Prostate gland (tissue), 2 donors: ENCODE measurements at regions of chr15 and their contacts with region 1.

Region 1: DNA sequence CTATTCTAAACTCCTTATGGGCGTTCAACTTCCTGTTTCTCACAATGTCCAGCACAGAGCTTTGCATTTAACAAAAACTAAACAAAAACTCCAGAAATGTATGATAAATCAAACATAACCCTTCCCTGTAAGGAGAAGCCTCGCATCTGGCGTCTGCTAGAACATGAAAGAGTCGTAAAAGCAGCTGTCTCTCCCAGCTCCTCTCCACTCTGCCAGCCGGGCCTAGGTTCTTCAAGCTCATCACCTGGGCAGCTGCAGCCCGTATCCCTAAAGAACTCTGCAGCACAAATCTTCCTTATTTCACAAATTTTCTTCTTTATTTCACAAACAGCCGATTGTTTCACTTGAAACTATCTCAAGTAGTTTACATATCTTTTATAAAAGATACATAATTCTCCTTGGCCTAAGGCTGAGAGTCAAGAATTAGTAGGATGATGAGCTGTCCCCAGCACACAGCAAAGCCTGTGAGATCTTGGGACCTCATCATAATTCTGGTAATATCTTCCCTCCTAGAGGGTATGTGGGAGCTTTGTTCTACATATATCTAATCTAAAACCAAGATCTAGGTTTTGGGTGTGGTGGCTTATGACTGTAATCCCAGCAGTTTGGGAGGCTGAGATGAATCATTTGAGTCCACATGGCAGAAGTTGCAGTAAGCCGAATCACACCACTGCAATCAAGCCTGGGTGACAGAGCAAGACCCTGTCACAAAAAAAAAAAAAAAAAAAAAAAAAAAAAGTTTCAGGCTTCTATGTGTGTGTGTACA is 35.3 kb downstream of the ANXA2 start:
- DNase-seq: no peak
- H3K4me3 ChIP-seq: no peak overlapping the region
- H3K27ac ChIP-seq: no peak overlapping the region
- H3K4me1 ChIP-seq: no peaks in the 10 kb centered on the region
- H3K27me3 ChIP-seq: no peaks in the 10 kb centered on the region
- CTCF ChIP-seq: no peak
- POLR2A ChIP-seq: no peak

Region 2: GRCh38 chr15:60047701-60048100 is 314.8 kb before region 1 on chr15:
- intact Hi-C with region 1: no loop called
- DNase-seq: no peak
- H3K4me3 ChIP-seq: no peak overlapping the region
- H3K27ac ChIP-seq: no peak overlapping the region
- H3K4me1 ChIP-seq: no peaks in the 10 kb centered on the region
- H3K27me3 ChIP-seq: no peaks in the 10 kb centered on the region
- CTCF ChIP-seq: no peak
- POLR2A ChIP-seq: no peak

Region 3: GRCh38 chr15:60070838-60071493 is 291.5 kb before region 1 on chr15:
- intact Hi-C with region 1: no loop called
- DNase-seq: no peak
- H3K4me3 ChIP-seq: no peak overlapping the region
- H3K27ac ChIP-seq: no peak overlapping the region
- H3K4me1 ChIP-seq: no peaks in the 10 kb centered on the region
- H3K27me3 ChIP-seq: no peaks in the 10 kb centered on the region
- CTCF ChIP-seq: no peak
- POLR2A ChIP-seq: no peak

Region 4: GRCh38 chr15:60195611-60196010 is 166.9 kb before region 1 on chr15:
- intact Hi-C with region 1: no loop called
- DNase-seq: no peak
- H3K4me3 ChIP-seq: no peak overlapping the region
- H3K27ac ChIP-seq: no peak overlapping the region
- H3K4me1 ChIP-seq: no peaks in the 10 kb centered on the region
- H3K27me3 ChIP-seq: no peaks in the 10 kb centered on the region
- CTCF ChIP-seq: no peak
- POLR2A ChIP-seq: no peak

Region 5: DNA sequence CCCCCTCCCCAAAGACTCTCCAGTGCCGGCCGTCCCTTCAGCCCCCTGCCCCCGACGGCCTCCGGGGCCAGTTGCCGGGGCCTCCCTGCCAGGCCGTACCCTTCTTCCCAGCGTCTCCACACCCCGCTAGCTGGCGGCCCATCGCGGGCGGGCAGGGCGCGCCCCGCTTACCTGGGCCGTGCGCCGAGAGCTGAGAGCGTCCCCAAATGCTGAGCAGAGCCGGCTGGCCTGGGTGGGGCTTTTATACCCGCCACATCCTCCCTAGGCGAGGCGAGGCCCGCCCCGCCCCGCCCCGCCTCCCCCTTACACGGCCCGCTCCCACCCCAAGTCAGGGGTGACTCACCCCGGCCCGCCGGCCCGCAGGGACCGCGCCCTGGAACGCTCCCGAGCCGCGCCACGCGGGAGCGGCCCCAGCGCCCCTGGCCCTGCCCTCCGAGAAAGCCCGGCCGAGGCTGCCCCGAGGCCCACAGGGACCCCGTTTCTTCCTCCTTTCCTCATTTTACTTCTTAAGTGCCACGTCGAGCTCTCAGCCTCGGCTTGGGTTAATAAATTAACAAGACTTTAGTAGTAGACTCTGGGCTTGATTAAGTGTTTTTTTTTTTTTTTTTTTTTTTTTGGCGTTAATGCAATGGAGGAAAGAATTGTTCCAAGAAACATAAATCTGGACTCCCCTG is 35.4 kb after region 1 on chr15 and contains the start of gene ANXA2:
- intact Hi-C with region 1: loop called (anchors 5 kb)
- DNase-seq: peak; percentile 85
- H3K4me3 ChIP-seq: peak within 1 kb of the TSS; percentile 76 to 79
- H3K27ac ChIP-seq: peak within 1 kb of the TSS; percentile 93 to 97
- H3K4me1 ChIP-seq: peaks cover 26% of the 10 kb centered on the region
- H3K27me3 ChIP-seq: no peaks in the 10 kb centered on the region
- CTCF ChIP-seq: no peak
- POLR2A ChIP-seq: peak; percentile 96
- total RNA-seq, gene ANXA2: 404 to 595 TPM

Region 6: DNA sequence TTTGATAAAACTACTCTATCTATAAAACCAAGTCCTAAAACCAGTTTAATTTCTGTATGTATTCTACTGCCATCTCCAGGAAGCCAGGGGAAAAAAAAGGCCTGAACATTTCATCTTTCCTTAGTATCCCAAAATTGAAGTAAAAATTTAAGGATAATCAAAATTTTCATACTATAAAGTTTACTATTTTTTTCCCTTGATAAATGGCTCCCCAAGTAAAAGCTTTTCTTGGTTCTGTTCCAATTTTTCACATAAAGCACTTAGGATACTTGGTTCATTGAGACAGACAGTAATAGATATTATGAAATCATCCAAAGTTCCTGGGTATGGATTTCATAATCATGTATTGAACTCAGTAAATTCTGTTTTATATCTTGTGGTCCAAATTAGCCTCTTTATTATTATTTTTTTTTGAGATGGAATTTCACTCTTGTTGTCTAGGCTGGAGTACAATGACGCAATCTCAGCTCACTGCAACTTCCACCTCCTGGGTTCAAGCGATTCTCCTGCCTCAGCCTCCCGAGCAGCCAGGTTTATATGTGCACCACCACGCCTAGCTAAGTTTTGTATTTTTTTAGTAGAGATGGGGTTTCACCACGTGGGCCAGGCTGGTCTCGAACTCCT is 81.9 kb after region 1 on chr15:
- intact Hi-C with region 1: loop called (anchors 2 kb)
- DNase-seq: no peak
- H3K4me3 ChIP-seq: no peak overlapping the region
- H3K27ac ChIP-seq: no peak overlapping the region
- H3K4me1 ChIP-seq: no peaks in the 10 kb centered on the region
- H3K27me3 ChIP-seq: no peaks in the 10 kb centered on the region
- CTCF ChIP-seq: peak in 3 of 4 experiments; percentile 47 to 74 (median 71)
- POLR2A ChIP-seq: no peak

Region 7: DNA sequence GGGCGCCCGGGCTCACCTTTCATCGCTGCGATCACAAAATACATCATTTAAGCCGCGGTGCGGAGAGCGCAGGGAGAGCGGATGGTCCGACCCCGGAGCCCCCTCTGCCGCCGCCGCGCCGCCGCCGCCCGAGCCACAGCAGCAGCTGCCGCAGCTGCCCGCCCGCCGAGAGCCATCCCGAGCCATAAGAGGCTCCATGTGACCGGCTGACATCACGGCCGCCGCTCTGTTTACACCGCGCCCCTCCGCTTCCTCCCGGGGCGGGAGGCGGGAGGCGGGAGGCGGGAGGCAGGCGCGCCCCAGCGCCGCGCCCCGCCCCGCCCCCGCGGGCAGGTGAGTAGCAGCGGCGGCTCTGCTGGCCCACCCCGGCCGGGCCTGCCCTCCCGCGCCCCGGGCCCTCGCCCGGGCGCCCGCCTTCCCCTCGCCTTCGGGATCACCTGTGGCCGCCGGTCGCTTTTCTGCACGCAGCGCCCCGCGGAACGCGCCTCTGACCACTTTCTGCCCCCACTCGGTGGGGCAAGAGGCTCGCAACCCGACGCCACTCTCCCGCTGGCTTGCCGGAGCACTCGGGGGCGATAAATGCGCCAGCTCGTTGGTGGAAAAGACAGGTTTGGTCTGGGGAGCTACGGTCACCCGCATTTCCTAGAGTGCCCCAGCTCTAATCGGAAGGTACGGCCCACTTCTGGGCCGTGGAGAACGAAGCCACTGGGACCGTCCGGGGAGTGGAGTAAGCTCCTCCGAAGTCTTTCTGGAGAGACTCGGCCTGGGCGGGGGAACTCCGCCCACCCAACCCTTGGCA is 230.1 kb after region 1 on chr15:
- intact Hi-C with region 1: no loop called
- DNase-seq: peak; percentile 90
- H3K4me3 ChIP-seq: peak overlapping the region; percentile 82 to 94
- H3K27ac ChIP-seq: peak overlapping the region; percentile 96
- H3K4me1 ChIP-seq: no peaks in the 10 kb centered on the region
- H3K27me3 ChIP-seq: no peaks in the 10 kb centered on the region
- CTCF ChIP-seq: peak in 2 of 4 experiments; percentile 20 to 27
- POLR2A ChIP-seq: peak; percentile 90